Activated CD4-positive, alpha-beta memory T cell treated with anti-CD3 and anti-CD28 coated beads for 36 hours (primary cell): ENCODE measurements at regions of chr10 and their contacts with region 1.

Region 1: GRCh38 chr10:33155720-33156638 is 178.5 kb downstream of the NRP1 start:
- DNase-seq: peak; percentile 53
- H3K4me3 Mint-ChIP-seq: no peak overlapping the region
- H3K27ac Mint-ChIP-seq: no peak overlapping the region
- H3K4me1 Mint-ChIP-seq: peaks cover 46% of the 10 kb centered on the region
- H3K27me3 Mint-ChIP-seq: no peaks in the 10 kb centered on the region

Region 2: GRCh38 chr10:32795598-32796183 is 360.3 kb before region 1 on chr10:
- CTCF ChIA-PET with region 1: interaction called, 3 read pairs
- POLR2A ChIA-PET with region 1: no interaction called
- intact Hi-C with region 1: loop called (anchors 1 kb)
- DNase-seq: no peak
- H3K4me3 Mint-ChIP-seq: no peak overlapping the region
- H3K27ac Mint-ChIP-seq: no peak overlapping the region
- H3K4me1 Mint-ChIP-seq: no peaks in the 10 kb centered on the region
- H3K27me3 Mint-ChIP-seq: no peaks in the 10 kb centered on the region

Region 3: GRCh38 chr10:33143160-33143728 is 12.7 kb before region 1 on chr10:
- CTCF ChIA-PET with region 1: interaction called, 25 read pairs
- POLR2A ChIA-PET with region 1: interaction called, 18 read pairs
- intact Hi-C with region 1: loop called (anchors 1 kb)
- DNase-seq: peak; percentile 78
- H3K4me3 Mint-ChIP-seq: no peak overlapping the region
- H3K27ac Mint-ChIP-seq: peak overlapping the region; percentile 66
- H3K4me1 Mint-ChIP-seq: peaks cover 63% of the 10 kb centered on the region
- H3K27me3 Mint-ChIP-seq: peaks cover 1% of the 10 kb centered on the region

Region 4: GRCh38 chr10:33365871-33366411 is 210.0 kb after region 1 on chr10:
- CTCF ChIA-PET with region 1: no interaction called
- POLR2A ChIA-PET with region 1: no interaction called
- intact Hi-C with region 1: no loop called
- DNase-seq: peak; percentile 51
- H3K4me3 Mint-ChIP-seq: no peak overlapping the region
- H3K27ac Mint-ChIP-seq: peak overlapping the region; percentile 84
- H3K4me1 Mint-ChIP-seq: peaks cover 19% of the 10 kb centered on the region
- H3K27me3 Mint-ChIP-seq: peaks cover 25% of the 10 kb centered on the region

Region 5: GRCh38 chr10:33939892-33940291 is 783.9 kb after region 1 on chr10:
- CTCF ChIA-PET with region 1: no interaction called
- POLR2A ChIA-PET with region 1: no interaction called
- intact Hi-C with region 1: no loop called
- DNase-seq: no peak
- H3K4me3 Mint-ChIP-seq: no peak overlapping the region
- H3K27ac Mint-ChIP-seq: no peak overlapping the region
- H3K4me1 Mint-ChIP-seq: no peaks in the 10 kb centered on the region
- H3K27me3 Mint-ChIP-seq: peaks cover 3% of the 10 kb centered on the region